Activated CD4-positive, alpha-beta T cell treated with anti-CD3 and anti-CD28 coated beads, Interleukin-2, amount 10 ng/mL, durations not matched to agents 24 days and 14 days (primary cell): ENCODE measurements at regions of chr1 and their contacts with region 1.

Region 1: DNA sequence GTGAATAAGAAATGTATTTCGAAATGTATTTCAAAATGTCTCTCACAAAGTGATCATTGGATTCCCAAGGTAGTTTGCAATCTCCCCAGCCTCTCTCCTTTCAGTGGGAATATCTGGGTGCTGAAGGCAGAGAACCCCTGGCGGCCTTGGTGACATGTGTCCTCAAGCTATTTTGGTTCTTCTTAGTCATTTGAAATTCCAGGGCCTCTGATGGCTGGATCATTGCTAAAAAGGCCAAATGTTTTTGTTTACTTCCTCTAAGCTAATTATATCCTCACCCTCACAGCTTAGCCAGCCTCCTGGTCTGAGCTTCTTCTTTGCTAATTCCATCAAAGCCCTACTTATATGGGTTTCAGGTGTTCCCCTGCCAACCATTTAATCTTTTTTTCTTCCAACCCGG is 71.2 kb downstream of the LRRC40 start:
- DNase-seq: no peak
- H3K4me3 Mint-ChIP-seq: no peak overlapping the region
- H3K27ac Mint-ChIP-seq: no peak overlapping the region
- H3K4me1 Mint-ChIP-seq: peaks cover 4% of the 10 kb centered on the region
- H3K27me3 Mint-ChIP-seq: peaks cover 14% of the 10 kb centered on the region

Region 2: DNA sequence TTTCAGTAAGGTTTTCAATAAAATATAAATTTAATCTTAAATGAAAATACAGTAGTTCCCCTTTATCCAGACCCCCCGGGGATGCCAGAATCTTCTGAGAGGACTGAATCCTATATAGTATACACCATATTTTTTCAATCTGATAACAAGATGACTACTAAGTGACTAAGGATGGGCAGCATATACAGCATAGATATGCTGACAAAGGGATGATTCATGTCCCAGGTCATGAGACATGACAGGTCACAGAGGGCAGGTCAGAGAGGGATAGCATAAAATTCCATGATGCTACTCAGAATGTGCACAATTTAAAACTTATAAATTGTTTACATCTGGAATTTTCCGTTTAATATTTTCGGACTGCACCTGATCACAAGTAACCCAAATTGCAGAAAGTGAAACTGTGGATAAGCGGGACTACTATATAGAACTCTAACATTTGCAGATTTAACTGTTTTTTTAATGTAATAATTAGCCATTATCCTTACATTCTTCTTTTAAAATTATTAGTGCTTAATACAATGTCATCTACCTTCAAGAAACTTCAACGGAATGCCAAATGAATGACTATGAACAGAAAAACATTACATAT is 22.5 kb after region 1 on chr1:
- intact Hi-C with region 1: no loop called
- DNase-seq: no peak
- H3K4me3 Mint-ChIP-seq: no peak overlapping the region
- H3K27ac Mint-ChIP-seq: no peak overlapping the region
- H3K4me1 Mint-ChIP-seq: no peaks in the 10 kb centered on the region
- H3K27me3 Mint-ChIP-seq: no peaks in the 10 kb centered on the region

Region 3: GRCh38 chr1:70247768-70248167 is 113.6 kb after region 1 on chr1:
- intact Hi-C with region 1: loop called (anchors 5 kb)
- DNase-seq: no peak
- H3K4me3 Mint-ChIP-seq: no peak overlapping the region
- H3K27ac Mint-ChIP-seq: peak overlapping the region; percentile 31
- H3K4me1 Mint-ChIP-seq: peaks cover 28% of the 10 kb centered on the region
- H3K27me3 Mint-ChIP-seq: no peaks in the 10 kb centered on the region

Region 4: GRCh38 chr1:70487910-70488665 is 353.9 kb after region 1 on chr1:
- intact Hi-C with region 1: loop called (anchors 2 kb)
- DNase-seq: peak; percentile 71
- H3K4me3 Mint-ChIP-seq: no peak overlapping the region
- H3K27ac Mint-ChIP-seq: no peak overlapping the region
- H3K4me1 Mint-ChIP-seq: no peaks in the 10 kb centered on the region
- H3K27me3 Mint-ChIP-seq: peaks cover 19% of the 10 kb centered on the region

Region 5: GRCh38 chr1:70509996-70510876 is 376.1 kb after region 1 on chr1:
- intact Hi-C with region 1: loop called (anchors 1 kb)
- DNase-seq: no peak
- H3K4me3 Mint-ChIP-seq: no peak overlapping the region
- H3K27ac Mint-ChIP-seq: no peak overlapping the region
- H3K4me1 Mint-ChIP-seq: no peaks in the 10 kb centered on the region
- H3K27me3 Mint-ChIP-seq: peaks cover 11% of the 10 kb centered on the region

Region 6: DNA sequence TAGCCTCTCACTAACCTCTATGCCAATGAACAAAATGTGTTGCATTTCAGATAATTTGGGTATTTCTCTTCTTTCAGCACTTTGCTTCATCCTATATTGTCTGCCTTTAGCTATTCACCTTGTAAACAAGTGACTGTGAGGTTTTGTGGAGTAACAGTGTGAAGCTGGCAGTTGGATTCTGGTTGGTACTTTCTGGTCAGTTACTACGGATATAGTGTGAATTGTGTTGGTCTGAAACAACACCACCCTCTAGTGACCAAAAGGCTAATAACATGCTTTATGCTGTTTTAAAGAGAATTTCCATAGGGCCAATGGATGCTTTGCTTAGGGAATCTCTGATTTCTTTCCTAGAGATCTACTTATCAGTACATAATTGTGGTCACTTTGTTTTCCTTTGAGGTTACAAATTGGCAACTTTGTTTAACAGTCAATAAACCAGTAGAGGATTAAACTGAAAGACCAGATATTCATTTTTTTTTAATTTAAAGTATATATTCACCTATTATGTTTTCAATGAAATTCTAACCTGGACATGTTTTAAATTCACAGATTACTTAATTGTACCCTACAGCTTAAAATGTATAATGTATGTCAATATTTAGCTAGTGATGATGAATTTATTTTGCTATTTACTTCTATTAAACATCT is 915.9 kb after region 1 on chr1:
- intact Hi-C with region 1: loop called (anchors 5 kb)
- DNase-seq: peak; percentile 82
- H3K4me3 Mint-ChIP-seq: no peak overlapping the region
- H3K27ac Mint-ChIP-seq: no peak overlapping the region
- H3K4me1 Mint-ChIP-seq: peaks cover 16% of the 10 kb centered on the region
- H3K27me3 Mint-ChIP-seq: peaks cover 45% of the 10 kb centered on the region